Activated B cell treated with CpG ODN at 0.5 μM for 24 hours (primary cell): ENCODE measurements at regions of chr2 and their contacts with region 1.

Region 1: GRCh38 chr2:105888625-105889400 is 144.1 kb downstream of the NCK2 start:
- DNase-seq: no peak
- ATAC-seq: no peak
- H3K4me3 Mint-ChIP-seq: no peak overlapping the region
- H3K27ac Mint-ChIP-seq: no peak overlapping the region
- H3K4me1 Mint-ChIP-seq: peaks cover 49% of the 10 kb centered on the region
- H3K27me3 Mint-ChIP-seq: no peaks in the 10 kb centered on the region
- CTCF ChIP-seq: no peak

Region 2: GRCh38 chr2:105904938-105905337 is 16.1 kb after region 1 on chr2:
- CTCF ChIA-PET with region 1: no interaction called
- POLR2A ChIA-PET with region 1: interaction called, 3 read pairs
- intact Hi-C with region 1: loop called (anchors 2 kb)
- DNase-seq: no peak
- ATAC-seq: peak; percentile 86
- H3K4me3 Mint-ChIP-seq: peak overlapping the region; percentile 4
- H3K27ac Mint-ChIP-seq: peak overlapping the region; percentile 1
- H3K4me1 Mint-ChIP-seq: peaks cover 38% of the 10 kb centered on the region
- H3K27me3 Mint-ChIP-seq: no peaks in the 10 kb centered on the region
- CTCF ChIP-seq: no peak